ENCODE measurements at regions of chr17 and their contacts with region 1.

Region 1: DNA sequence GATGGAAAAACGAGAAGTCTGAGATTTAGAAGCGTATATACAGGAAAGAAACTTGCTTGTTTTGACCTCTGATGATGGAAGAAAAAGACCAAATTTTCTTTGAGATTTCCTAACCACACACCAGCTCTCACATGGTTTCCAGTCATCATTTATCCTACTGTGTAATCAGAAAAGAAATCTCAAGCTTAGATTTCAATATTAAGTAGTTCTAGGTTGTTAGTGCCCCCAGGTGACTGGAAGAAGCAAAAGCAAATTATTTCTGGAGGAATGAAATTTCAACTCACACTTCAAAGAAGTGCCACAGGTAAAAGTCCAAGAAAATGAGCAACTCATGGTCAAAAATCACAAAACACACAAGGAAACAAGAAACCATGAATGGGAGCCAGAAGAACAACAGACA is 51.8 kb upstream of the KDM6B start:
- DNase-seq: no peak
- H3K4me3 Mint-ChIP-seq: no peak overlapping the region
- H3K27ac Mint-ChIP-seq: no peak overlapping the region
- H3K4me1 Mint-ChIP-seq: no peaks in the 10 kb centered on the region
- H3K27me3 Mint-ChIP-seq: peaks cover 30% of the 10 kb centered on the region
- CTCF ChIP-seq: no peak

Region 2: DNA sequence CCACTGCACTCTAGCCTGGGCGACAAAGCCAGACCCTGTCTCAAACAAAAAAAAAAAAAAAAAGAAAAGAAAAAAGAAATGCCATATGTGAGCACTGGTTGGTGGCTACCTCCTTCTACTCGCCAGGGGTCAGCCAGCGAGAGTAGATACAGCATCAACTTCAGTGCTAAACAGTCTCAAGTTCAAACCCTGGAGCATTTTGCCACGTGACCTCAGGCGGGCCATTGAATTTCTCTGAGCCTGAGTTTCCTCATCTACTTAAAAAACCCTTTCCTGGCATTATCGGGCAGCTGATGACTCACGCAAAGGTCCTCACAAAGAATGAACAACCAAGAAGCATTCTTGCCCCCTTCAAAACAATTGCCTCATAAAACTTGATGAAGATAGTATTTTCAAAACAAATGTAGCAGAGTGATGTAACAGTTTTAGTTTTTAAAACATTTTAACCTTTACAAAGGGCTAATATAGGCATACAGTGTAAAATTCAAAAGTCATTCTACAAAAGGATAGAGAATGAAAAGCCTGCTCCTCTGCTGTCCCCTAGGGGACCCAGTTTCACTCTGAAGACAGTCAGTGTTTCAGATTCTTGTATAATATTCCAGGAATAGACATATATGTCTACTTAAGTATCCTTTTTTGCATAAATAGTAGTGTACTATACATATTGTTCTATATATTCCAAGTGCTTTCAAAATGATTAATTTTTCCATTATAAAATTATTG is 36.3 kb before region 1 on chr17:
- CTCF ChIA-PET with region 1: interaction called, 27 read pairs
- intact Hi-C with region 1: loop called (anchors 2 kb)
- DNase-seq: peak; percentile 50
- H3K4me3 Mint-ChIP-seq: no peak overlapping the region
- H3K27ac Mint-ChIP-seq: no peak overlapping the region
- H3K4me1 Mint-ChIP-seq: no peaks in the 10 kb centered on the region
- H3K27me3 Mint-ChIP-seq: peaks cover 20% of the 10 kb centered on the region
- CTCF ChIP-seq: no peak

Measured in Calu3 (cell line).